Endothelial cell of umbilical vein (primary cell): ENCODE measurements at regions of chr1 and their contacts with region 1.

Region 1: DNA sequence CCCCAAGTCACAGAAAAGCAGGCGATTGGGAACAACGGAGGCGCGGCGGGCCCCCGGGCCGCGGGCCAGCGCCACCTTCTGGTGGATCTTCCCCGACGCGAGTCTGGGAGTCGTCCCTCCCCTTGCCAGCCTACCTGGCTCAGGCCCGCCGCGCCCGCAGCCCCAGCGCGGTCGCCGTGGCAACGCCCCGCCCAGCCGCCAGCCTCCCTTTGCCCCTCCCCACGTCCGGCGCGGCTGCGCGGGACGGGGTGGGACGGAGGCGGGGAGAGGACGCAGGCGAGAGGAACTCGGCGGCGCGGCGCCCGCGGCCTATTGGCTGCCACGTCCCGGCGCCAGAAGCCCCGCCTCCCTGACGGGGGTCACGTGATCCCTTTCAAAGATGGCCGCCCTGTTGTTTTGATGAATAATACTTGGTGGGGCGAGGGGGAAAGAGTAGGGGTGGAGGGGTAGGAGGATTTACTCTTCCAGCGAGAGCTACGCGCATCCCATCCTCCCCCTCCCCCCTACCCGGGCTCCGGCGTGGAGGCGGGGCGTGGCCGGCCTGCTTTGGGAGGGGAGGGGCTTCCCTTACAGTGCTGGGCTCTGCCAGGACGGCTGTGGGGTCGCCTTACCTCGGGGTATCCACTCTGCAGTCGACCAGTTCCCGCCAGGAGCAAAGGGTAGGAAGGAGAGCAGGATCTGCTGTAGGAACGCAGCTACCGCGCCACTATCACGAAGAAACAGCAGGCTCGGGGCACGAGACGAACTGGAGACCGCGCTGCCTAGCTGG is at the start of gene UBE4B:
- DNase-seq: peak; percentile 99
- H3K4me3 ChIP-seq: peak within 1 kb of the TSS; percentile 55 to 85 (median 72)
- H3K27ac ChIP-seq: peak within 1 kb of the TSS; percentile 74
- H3K4me1 ChIP-seq: peaks cover 14% of the 10 kb centered on the region
- H3K27me3 ChIP-seq: no peaks in the 10 kb centered on the region
- CTCF ChIP-seq: peak; percentile 93 to 95
- POLR2A ChIP-seq: peak; percentile 34
- total RNA-seq, gene UBE4B: 54.5 and 56.7 TPM in 2 replicates

Region 2: DNA sequence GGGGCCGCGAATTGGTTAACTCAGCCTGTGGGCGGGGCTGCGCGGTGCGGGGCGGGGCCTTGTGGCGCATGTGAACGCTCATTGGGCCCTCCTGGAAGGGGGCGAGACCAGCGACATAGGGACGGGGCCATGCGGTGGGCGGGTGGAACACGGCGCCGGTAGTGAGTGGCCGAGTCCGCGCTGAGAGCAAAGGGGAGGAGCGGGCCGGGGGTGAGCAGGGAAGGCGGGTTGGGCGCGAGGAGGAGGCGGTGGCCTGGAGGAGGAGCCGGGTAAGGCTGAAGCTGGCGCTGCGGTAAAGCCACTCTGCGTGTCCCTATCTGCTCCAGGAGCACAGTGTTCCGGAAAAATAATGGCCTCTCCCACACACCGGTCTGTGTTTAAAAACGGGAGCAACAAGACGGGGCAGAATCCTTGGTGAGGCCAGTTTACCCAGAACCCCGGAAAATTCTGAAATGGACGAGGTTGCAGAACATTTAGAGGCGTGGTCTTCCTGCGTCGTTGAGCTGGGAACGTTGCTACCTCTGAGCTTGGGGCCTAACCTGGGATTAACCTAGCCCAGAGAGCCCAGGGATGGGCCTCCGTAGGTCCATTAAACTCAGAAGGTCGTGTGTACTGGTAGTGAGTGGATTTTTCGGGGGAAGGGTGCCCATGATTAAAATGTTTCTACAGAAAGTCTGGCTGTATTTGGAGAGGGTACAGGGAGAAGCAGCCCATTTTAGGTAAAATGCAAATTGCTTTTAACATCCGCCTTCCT is 122.2 kb before region 1 on chr1:
- CTCF ChIA-PET with region 1: no interaction called
- POLR2A ChIA-PET with region 1: no interaction called
- dilution Hi-C with region 1: no loop called
- intact Hi-C with region 1: loop called (anchors 1 kb)
- DNase-seq: peak; percentile 99
- H3K4me3 ChIP-seq: peak overlapping the region; percentile 35 to 70 (median 37)
- H3K27ac ChIP-seq: peak overlapping the region; percentile 61
- H3K4me1 ChIP-seq: peaks cover 11% of the 10 kb centered on the region
- H3K27me3 ChIP-seq: no peaks in the 10 kb centered on the region
- CTCF ChIP-seq: no peak
- POLR2A ChIP-seq: peak; percentile 44

Region 3: GRCh38 chr1:9990944-9991343 is 41.8 kb before region 1 on chr1:
- CTCF ChIA-PET with region 1: interaction called, 3 read pairs
- POLR2A ChIA-PET with region 1: no interaction called
- dilution Hi-C with region 1: no loop called
- intact Hi-C with region 1: loop called (anchors 1 kb)
- DNase-seq: peak; percentile 90
- H3K4me3 ChIP-seq: no peak overlapping the region
- H3K27ac ChIP-seq: no peak overlapping the region
- H3K4me1 ChIP-seq: peaks cover 16% of the 10 kb centered on the region
- H3K27me3 ChIP-seq: peaks cover 11 to 21% of the 10 kb centered on the region in 2 experiments
- CTCF ChIP-seq: no peak
- POLR2A ChIP-seq: no peak

Region 4: GRCh38 chr1:10065344-10065685 is 32.5 kb after region 1 on chr1:
- CTCF ChIA-PET with region 1: interaction called, 5 read pairs
- POLR2A ChIA-PET with region 1: no interaction called
- dilution Hi-C with region 1: no loop called
- intact Hi-C with region 1: loop called (anchors 2 kb)
- DNase-seq: peak; percentile 30
- H3K4me3 ChIP-seq: no peak overlapping the region
- H3K27ac ChIP-seq: no peak overlapping the region
- H3K4me1 ChIP-seq: peaks cover 26% of the 10 kb centered on the region
- H3K27me3 ChIP-seq: no peaks in the 10 kb centered on the region
- CTCF ChIP-seq: no peak
- POLR2A ChIP-seq: no peak

Region 5: DNA sequence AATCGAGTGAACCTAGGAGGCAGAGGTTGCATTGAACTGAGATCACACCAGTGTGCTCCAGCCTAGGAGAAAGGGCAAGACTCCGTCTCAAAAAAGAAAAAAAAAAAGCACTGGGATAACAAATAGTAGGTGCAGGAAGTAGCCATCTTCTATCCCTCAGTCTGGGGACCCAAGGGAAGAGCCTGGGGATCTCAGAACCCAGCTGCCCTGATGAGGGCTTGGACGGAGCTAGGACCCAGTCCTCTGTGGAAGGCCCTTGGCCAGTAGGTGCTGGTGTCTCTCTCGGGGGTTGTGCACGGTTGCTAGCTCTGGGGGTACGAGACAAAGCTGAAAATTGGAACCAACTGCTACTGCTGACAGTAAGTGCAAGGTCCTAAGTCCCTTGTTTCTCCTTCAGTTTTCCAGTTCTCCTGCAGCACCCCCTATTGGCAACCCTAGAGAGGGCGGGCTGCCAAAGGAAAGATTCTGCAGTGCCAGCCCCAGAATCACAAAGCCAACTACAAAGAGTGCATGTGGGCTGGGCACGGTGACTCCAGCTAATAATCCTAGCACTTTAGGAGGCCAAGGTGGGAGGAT is 120.0 kb after region 1 on chr1:
- CTCF ChIA-PET with region 1: interaction called, 3 read pairs
- POLR2A ChIA-PET with region 1: no interaction called
- dilution Hi-C with region 1: no loop called
- intact Hi-C with region 1: loop called (anchors 1 kb)
- DNase-seq: peak; percentile 58
- H3K4me3 ChIP-seq: no peak overlapping the region
- H3K27ac ChIP-seq: no peak overlapping the region
- H3K4me1 ChIP-seq: no peaks in the 10 kb centered on the region
- H3K27me3 ChIP-seq: no peaks in the 10 kb centered on the region
- CTCF ChIP-seq: peak; percentile 72 to 76
- POLR2A ChIP-seq: no peak

Region 6: GRCh38 chr1:10338047-10338446 is 305.3 kb after region 1 on chr1:
- CTCF ChIA-PET with region 1: interaction called, 5 read pairs
- POLR2A ChIA-PET with region 1: no interaction called
- dilution Hi-C with region 1: no loop called
- intact Hi-C with region 1: loop called (anchors 5 kb)
- DNase-seq: peak; percentile 58
- H3K4me3 ChIP-seq: no peak overlapping the region
- H3K27ac ChIP-seq: no peak overlapping the region
- H3K4me1 ChIP-seq: peaks cover 10% of the 10 kb centered on the region
- H3K27me3 ChIP-seq: no peaks in the 10 kb centered on the region
- CTCF ChIP-seq: peak; percentile 65 to 75
- POLR2A ChIP-seq: no peak